ENCODE measurements at regions of chr1 and their contacts with region 1.

Region 1: DNA sequence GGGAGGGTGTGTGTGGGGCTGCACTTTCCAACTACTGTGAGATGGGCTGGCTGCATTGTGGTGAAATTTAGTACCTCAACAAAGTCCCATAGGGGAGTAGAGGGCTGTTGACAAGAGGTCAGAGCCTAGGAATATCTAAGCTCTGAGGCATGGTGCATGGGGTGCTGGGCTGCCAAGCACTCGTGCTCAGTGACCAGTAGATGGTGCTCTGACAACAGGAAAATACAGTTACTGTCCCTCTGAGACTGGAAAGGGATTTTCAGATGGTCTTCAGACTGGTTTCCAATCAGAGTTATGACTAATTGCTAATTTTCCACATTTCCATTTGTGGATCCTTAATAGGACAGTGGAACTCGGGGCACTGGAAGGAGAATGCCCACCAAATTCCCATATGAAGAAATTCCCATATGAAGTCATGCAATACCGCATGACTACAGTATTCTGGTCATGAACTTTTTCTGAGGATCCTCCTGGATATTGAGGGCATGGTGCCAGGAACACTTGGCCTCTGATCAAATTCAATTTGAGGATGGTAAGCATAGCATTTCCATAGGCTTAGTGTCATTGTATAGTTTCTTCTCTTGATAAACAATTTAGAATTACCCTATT is 4.1 kb upstream of the CACNA1E start:
- DNase-seq: no peak
- ATAC-seq: peak; percentile 58
- H3K4me3 Mint-ChIP-seq: no peak overlapping the region
- H3K27ac Mint-ChIP-seq: no peak overlapping the region
- H3K4me1 Mint-ChIP-seq: peaks cover 16% of the 10 kb centered on the region
- H3K27me3 Mint-ChIP-seq: peaks cover 25% of the 10 kb centered on the region
- CTCF ChIP-seq: peak; percentile 35

Region 2: DNA sequence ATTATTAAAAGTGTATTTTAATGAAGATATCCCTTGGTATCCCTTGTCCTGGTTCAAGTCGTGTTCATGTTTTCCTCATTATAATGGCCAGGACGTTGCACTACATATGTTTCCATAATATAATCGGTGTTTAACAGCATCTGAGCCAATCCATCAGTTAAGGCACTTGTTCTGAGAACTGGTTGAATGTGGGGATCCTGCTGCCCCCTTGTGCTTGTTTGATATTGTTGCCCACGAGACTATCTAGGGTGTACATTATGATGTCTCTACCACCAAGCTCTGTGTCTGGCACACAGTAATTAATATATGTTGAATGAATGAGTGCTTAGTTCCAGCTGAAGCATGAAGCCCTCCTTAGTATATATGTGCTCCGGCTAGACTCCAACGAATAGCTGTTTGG is 197.0 kb after region 1 on chr1:
- CTCF ChIA-PET with region 1: interaction called, 56 read pairs
- POLR2A ChIA-PET with region 1: no interaction called
- intact Hi-C with region 1: loop called (anchors 1 kb)
- DNase-seq: no peak
- ATAC-seq: no peak
- H3K4me3 Mint-ChIP-seq: no peak overlapping the region
- H3K27ac Mint-ChIP-seq: no peak overlapping the region
- H3K4me1 Mint-ChIP-seq: no peaks in the 10 kb centered on the region
- H3K27me3 Mint-ChIP-seq: peaks cover 12% of the 10 kb centered on the region
- CTCF ChIP-seq: no peak

Region 3: DNA sequence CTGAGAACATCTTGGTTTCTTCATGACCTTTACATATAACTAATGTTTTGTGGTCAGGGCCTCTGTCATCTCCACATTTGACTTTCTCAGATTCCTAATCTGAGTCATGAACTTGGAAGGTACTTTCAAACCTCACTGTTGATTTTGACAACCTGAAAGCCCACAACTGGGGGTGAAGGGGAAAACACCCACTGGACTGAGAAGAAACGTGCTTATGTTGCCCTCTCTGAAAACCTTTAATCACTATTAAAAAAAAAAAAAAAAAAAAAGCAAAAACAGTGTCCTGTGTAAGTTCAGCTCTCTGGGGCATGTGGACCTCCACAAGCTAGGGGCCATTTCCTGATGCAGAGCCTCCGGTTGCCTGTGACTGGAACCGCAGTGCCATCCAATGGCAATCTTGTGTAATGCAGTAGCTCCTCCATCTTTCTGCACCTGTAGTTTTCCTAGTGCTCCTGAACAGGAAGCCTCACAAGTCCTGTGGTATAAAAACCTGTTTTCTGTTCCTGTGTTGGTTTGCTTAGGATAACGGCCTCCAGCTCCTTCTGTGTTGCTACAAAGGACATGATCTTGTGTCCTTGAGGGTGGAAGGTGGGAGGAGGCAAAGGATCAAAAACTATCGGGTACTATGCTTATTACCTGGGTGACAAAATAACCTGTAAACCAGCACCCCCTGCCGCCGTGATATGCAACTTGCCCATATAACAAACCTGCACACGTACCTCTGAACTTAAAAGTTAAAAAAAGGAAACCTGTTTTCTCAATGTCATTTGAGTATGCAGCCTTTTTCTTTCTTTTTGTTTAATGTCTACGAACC is 457.7 kb after region 1 on chr1:
- CTCF ChIA-PET with region 1: interaction called, 17 read pairs
- POLR2A ChIA-PET with region 1: no interaction called
- intact Hi-C with region 1: no loop called
- DNase-seq: no peak
- ATAC-seq: no peak
- H3K4me3 Mint-ChIP-seq: no peak overlapping the region
- H3K27ac Mint-ChIP-seq: no peak overlapping the region
- H3K4me1 Mint-ChIP-seq: peaks cover 2% of the 10 kb centered on the region
- H3K27me3 Mint-ChIP-seq: peaks cover 4% of the 10 kb centered on the region
- CTCF ChIP-seq: no peak

Region 4: DNA sequence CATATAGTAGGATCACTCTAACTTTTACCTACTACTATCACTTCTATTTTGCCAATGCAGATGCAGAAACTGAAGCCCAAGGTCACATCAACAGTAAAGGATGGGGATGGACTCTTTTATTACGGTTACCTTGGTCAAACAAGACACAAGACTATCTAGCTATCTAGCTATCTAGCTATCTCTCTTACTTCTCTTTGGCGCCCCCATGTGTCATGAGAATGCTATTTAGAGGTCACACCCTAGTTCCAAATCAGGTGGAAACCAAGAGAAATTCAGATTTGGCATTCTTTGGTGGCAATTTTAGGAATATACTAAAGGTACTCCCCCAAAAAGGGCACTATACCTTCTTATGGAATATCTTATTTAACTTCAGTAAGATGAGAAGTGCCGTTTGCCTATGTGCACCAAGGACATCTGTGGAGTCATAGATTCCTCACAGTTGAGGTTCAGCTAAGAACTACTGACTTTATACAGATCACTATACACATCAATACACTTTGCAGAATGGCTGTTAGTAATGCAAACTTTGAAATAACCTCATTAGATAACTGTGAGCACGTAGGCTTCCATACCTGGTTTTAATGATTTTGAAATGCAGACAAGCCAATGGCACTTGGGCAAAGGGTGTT is 575.6 kb after region 1 on chr1:
- CTCF ChIA-PET with region 1: interaction called, 50 read pairs
- POLR2A ChIA-PET with region 1: no interaction called
- intact Hi-C with region 1: loop called (anchors 1 kb)
- DNase-seq: no peak
- ATAC-seq: peak; percentile 56
- H3K4me3 Mint-ChIP-seq: no peak overlapping the region
- H3K27ac Mint-ChIP-seq: no peak overlapping the region
- H3K4me1 Mint-ChIP-seq: no peaks in the 10 kb centered on the region
- H3K27me3 Mint-ChIP-seq: peaks cover 35% of the 10 kb centered on the region
- CTCF ChIP-seq: no peak

Region 5: DNA sequence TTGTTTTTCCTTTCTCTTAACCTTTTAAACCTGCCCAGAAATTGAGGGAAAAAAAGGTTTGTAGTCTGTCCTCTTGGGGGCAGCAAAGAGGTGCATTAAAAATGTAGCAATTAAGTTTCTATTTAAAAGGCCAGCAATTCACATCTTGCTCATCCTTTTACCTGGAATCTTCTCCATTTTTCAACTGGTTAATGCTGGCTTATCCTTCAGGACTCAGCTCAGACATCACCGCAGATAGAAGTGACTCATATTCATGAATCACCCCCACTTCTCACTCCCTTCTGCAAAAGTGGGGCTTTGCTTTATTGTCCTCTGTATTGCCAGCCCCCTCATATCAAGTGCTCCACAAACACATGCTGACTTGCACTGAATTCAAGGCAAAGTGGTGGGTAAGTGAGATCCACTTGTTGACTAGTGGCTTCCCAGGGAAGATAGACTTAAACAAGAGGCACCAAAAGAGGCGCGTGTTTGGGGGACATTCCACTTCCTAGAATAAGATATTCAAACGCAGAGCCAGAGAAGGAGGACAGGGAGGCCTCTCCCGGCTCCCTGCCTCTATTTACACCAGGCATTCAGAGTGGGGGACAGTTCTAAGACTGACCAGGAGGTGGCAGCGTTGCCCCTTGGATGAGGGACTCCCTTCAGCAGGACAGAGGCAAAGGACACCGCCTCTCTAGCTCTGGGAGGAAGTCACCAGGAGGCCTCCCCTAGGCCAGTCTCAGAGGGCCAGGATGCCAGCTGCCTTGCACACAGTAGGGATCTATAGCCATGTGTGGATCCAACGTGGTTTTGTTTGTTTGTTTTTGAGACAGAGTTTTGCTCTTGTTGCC is 605.5 kb after region 1 on chr1:
- CTCF ChIA-PET with region 1: interaction called, 29 read pairs
- POLR2A ChIA-PET with region 1: no interaction called
- intact Hi-C with region 1: loop called (anchors 1 kb)
- DNase-seq: peak; percentile 47
- ATAC-seq: peak; percentile 77
- H3K4me3 Mint-ChIP-seq: no peak overlapping the region
- H3K27ac Mint-ChIP-seq: no peak overlapping the region
- H3K4me1 Mint-ChIP-seq: peaks cover 4% of the 10 kb centered on the region
- H3K27me3 Mint-ChIP-seq: no peaks in the 10 kb centered on the region
- CTCF ChIP-seq: no peak